ENCODE measurements at regions of chr6 and their contacts with region 1.

Region 1: DNA sequence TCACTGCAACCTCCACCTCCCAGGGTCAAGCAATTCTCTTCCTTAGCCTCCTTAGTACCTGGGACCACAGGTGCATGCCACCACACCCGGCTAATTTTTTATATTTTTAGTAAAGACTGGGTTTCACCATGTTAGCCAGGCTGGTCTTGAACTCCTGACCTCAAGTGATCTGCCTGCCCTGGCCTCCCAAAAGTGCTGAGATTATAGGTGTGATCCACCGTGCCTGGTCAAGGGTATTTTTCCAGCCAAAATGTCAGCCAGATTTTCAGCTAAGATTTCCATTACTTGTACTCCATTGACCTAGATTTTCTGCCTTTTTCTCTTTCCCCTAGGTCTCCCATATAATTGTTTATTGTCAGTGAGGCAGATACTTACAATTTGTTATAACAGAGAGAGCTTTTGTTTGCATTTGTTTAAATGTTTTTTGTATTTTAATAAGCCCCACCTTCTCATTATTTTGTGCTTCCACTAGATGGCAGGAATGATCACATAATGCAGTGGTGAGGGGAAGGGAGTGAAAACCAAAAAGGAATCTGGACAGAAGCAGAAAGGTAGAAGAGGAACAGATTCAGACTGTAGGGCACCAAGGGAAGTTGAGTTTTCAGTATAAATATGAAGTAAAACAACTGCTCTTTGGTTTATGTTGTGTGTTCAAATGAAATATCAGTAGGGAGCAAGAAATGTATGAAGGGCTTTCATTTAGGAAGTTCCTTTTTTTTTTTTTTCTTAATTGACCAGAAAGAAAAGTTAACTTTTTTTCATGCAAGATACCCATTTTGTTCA is 29.7 kb downstream of the RPF2 start:
- DNase-seq: peak; percentile 58
- CTCF ChIP-seq: peak; percentile 58

Region 2: DNA sequence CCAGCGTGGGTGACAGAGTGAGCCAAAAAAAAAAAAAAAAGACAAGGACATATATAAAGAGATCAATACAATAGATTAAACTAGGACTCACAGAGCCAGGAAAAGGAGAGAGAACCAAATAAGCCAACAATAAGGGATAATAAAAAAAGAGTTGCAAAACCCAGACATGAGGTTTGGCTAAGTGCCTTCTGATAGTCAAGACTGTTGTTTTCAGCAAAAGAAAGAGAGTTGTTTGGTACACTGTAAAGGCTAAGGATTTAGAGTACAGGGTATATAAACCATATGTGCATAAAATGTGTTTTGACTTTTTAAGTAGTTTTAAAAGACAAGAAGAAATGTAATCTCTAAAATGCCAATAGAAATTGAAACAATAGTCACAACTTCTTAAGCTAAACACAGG is 13.1 kb after region 1 on chr6:
- CTCF ChIA-PET with region 1: interaction called, 48 read pairs
- POLR2A ChIA-PET with region 1: no interaction called
- DNase-seq: no peak
- CTCF ChIP-seq: no peak

Measured in GM10248 (cell line).